Activated CD4-positive, alpha-beta T cell treated with anti-CD3 and anti-CD28 coated beads, Interleukin-2, amount 10 ng/mL, durations not matched to agents 24 days and 14 days (primary cell): ENCODE measurements at regions of chr3 and their contacts with region 1.

Region 1: DNA sequence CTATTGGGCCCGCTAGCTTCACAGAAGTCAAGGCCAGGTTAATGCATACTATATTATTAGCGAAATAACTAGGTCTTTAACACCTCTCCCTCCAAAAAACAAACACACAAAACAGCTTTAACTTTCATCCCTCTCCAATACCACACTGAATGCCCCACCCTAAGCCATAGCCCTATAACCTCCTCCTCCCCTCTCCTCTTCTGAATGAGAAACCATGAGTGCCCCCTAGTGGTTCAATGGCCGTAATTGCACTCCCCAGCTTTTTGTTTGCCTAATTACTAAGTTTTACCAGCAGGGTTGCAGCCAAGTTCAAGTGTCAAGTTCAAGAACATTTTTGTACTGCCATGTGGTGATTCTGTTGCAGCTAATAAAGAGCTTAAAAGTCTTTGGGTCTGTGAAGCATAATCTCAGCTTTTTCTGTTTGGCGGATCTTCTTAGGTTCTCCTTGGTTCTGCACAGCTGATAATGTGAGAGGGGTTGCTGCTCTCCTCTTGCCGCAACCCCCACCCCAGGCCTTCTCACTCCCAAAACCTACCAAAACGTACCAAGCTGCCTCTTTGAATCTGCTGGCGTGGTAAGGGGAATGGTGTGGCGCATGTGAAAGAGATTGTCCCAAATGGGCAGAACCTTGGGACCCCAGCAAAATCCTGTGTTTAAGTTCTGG is 57.9 kb downstream of the RPL22L1 start:
- DNase-seq: peak; percentile 90
- H3K4me3 Mint-ChIP-seq: no peak overlapping the region
- H3K27ac Mint-ChIP-seq: no peak overlapping the region
- H3K4me1 Mint-ChIP-seq: peaks cover 4% of the 10 kb centered on the region
- H3K27me3 Mint-ChIP-seq: peaks cover 2% of the 10 kb centered on the region

Region 2: DNA sequence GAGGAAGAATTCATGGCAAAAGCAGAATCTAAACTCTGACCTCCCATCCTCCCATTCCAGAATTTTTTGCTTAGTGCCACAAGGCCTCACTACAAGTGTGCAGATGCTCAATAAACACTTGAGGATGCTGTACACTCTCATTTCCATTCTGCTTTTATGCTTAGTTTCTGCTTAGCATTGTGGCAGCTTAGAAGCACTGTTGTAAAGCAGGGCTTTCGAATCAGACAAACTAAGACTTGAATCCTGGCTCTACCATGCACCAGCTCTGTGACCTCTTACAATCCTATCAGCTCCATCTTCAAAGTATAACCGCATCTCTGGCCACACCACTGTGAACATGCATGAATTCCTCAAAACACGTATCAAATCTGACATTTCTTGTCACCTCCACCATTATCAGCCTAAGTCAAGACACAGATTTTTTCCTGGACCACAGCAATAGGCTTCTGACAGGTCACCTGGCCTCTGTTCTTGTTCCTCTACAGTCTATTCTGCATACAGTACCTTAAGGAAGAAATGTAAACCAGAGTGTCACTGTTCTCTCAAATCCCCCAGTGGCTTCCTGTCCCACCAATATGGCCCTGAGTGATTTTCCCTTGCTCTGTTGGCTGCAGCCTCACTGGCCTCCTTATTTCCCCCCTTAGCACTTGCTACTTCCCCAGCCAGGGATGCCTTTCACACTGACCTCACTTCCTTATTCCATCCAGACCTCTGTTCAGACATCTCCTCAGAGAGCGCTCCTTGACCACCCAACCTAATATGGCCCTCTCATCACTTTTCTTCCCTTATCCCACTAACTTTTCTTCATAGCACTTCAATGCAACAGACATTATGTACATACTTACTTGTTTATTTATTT is 622.4 kb before region 1 on chr3:
- intact Hi-C with region 1: loop called (anchors 1 kb)
- DNase-seq: no peak
- H3K4me3 Mint-ChIP-seq: no peak overlapping the region
- H3K27ac Mint-ChIP-seq: no peak overlapping the region
- H3K4me1 Mint-ChIP-seq: peaks cover 12% of the 10 kb centered on the region
- H3K27me3 Mint-ChIP-seq: peaks cover 12% of the 10 kb centered on the region

Region 3: GRCh38 chr3:170307671-170308403 is 504.2 kb before region 1 on chr3:
- intact Hi-C with region 1: loop called (anchors 1 kb)
- DNase-seq: no peak
- H3K4me3 Mint-ChIP-seq: no peak overlapping the region
- H3K27ac Mint-ChIP-seq: no peak overlapping the region
- H3K4me1 Mint-ChIP-seq: no peaks in the 10 kb centered on the region
- H3K27me3 Mint-ChIP-seq: no peaks in the 10 kb centered on the region

Region 4: DNA sequence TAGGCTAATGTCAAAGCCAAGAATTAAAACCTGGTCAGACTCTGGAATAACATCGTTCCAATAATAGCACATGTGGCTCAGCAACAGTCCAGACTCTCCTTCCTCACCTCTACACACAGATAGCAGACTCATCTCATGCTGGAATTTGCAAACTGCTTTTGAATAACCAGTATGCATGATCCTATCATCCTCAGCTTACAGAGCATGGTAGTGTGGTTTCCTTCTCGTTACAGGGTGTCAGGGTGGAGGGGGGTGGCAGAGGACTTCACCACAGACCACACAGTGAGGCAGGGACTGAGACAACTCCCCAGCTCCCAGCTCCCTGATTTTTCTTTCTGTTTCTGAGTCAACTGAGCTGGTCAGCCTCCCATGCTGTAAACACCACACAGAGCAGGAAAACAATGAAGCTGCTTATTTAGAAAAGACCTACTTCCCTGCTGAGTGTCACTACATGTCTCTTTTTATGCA is 43.7 kb before region 1 on chr3:
- intact Hi-C with region 1: no loop called
- DNase-seq: no peak
- H3K4me3 Mint-ChIP-seq: no peak overlapping the region
- H3K27ac Mint-ChIP-seq: no peak overlapping the region
- H3K4me1 Mint-ChIP-seq: no peaks in the 10 kb centered on the region
- H3K27me3 Mint-ChIP-seq: peaks cover 5% of the 10 kb centered on the region